AG04450 (cell line): ENCODE measurements at regions of chr16 and their contacts with region 1.

Region 1: DNA sequence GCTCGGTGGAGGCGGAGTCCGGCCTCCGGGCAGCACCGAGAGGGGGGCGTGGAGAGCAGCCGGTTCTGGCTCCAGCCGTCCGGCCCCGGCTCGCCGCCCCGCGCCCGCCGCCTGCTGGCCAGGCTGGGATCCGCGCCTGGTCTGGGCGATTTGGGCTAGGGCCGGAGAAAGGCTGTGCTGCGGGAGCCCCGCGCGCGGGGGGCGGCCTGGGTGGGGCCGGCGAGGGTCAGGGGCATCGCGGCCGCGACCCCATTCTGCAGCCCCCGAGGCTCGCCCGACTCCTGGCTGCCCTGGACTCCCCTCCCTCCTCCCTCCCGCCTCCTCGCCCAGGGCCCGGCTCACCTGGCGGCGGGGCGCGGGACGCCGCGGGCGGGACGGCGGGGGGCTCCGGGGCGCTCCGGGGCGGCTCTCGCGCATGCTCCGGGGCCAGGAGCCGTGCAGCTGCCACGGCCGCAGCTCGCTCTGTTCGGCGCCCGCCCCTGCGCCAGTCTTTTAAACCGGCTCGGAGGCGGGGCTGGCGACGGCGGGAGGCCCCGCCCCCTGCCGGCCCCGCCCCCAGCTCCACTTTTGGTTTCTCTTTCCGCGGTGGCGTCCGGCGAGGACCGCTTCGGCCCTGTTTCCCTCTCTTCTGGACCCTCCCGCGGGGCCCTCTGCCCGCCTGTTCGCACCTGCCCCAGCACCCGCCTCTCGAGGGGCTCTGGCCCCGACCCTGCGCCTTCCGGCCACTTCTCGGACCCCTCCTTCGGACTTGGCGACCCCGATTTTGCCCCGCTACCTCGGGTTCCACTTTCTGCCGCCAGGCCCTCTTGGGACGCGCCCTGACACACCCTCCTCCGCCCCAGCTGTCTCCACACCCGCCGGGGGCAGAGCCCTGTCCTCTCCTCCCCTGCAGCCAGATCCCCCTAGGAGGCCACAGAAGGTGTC is at the start of gene SOCS1:
- DNase-seq: peak; percentile 66
- H3K4me3 ChIP-seq: peak within 1 kb of the TSS; percentile 97
- H3K27ac ChIP-seq: peak within 1 kb of the TSS; percentile 97
- H3K27me3 ChIP-seq: peaks cover 2% of the 10 kb centered on the region
- CTCF ChIP-seq: peak; percentile 64
- polyA plus RNA-seq, gene SOCS1: 11.6 and 21.9 TPM in 2 replicates

Region 2: GRCh38 chr16:10949370-10949970 is 306.5 kb before region 1 on chr16:
- CTCF ChIA-PET with region 1: interaction called, 19 read pairs
- POLR2A ChIA-PET with region 1: interaction called, 6 read pairs
- DNase-seq: no peak
- H3K4me3 ChIP-seq: no peak overlapping the region
- H3K27ac ChIP-seq: no peak overlapping the region
- H3K27me3 ChIP-seq: no peaks in the 10 kb centered on the region
- CTCF ChIP-seq: no peak

Region 3: DNA sequence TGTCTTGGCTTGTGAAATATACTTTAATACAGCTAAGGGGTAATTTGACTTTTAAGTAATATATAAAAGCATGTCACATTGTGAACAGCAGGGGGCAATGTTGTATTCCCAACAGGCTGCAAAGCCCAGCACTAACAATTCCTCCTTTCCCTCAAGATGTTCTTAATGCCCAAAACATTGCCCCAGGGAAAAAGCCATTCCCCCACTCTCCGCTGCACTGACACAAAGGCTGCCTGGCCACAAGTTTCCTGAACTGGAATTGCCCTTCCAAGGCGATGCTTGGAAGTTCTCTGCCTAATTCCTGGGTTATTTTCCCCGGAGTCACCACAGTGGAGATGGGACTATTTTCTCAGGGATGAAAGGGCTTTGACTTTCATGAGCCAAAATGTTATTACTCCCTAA is 284.4 kb before region 1 on chr16:
- CTCF ChIA-PET with region 1: interaction called, 45 read pairs
- POLR2A ChIA-PET with region 1: interaction called, 26 read pairs
- DNase-seq: peak; percentile 88
- H3K4me3 ChIP-seq: no peak overlapping the region
- H3K27ac ChIP-seq: peak overlapping the region; percentile 4
- H3K27me3 ChIP-seq: no peaks in the 10 kb centered on the region
- CTCF ChIP-seq: peak; percentile 75

Region 4: DNA sequence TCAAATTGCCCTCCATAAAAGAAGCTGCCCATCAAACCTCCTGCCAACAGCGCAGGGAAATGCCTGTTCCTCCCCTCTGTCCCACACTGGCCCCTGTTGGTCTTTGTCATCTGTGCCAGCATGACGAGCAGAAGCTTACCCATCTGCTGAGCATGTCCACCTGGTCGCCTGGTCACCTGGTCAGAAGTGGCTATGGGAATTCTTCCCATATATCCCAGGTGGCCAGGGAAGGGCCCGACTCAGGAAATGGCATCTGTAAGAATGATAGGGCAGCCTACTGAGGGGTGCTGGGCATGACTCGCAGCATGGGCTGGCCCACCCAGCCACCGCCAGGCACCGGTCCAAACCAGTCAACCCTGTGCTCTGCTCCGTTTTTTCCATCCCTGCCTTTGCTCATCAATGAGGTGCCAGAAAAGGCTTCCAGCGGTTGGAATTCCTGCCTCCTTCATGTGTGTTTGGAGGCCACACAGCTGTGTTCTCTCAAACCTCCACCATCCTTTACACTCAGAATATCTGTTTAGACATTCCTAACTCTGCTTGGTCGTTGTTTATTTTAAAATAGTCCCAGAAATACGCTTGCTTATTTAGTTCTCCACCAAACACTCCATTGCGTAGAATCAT is 166.4 kb before region 1 on chr16:
- CTCF ChIA-PET with region 1: interaction called, 4 read pairs
- POLR2A ChIA-PET with region 1: interaction called, 14 read pairs
- DNase-seq: peak; percentile 98
- H3K4me3 ChIP-seq: no peak overlapping the region
- H3K27ac ChIP-seq: peak overlapping the region; percentile 97
- H3K27me3 ChIP-seq: no peaks in the 10 kb centered on the region
- CTCF ChIP-seq: no peak

Region 5: DNA sequence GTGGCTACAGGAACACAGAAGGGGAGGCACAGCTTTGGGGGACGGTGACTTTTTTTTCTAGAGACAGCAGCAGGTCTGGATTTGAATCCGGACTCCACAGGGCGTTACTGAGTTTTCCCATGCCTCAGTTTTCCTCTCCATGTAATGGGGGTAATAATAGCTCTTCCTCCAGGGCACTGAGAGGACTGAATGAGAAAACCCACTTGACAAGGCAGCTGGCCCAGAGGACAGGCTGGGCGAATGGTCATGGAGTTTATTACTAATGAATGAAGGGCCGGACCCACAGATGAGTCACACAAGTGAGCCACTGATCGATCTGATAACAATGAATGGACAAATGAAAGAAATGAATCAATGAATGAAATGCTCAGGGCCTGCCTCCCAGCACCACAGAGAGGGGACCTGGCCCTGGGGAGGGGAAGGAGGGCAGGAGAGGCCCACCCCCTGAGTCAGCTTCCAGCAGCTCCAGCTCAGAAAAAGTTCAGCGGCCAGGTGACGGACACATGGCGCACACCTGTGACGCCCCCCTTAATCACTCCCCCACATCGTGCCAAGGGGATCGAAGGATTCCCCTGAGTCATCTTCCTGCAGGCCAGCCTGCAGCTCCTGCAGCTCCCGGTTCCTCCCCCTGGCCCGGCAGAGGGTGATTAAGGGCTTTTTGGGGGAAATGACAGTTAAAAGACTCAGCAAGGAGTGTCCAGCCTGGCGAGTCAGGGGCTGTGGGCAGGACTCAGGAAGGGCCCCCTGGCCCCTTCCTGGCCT is 54.3 kb before region 1 on chr16:
- CTCF ChIA-PET with region 1: interaction called, 4 read pairs
- POLR2A ChIA-PET with region 1: interaction called, 11 read pairs
- DNase-seq: peak; percentile 59
- H3K4me3 ChIP-seq: no peak overlapping the region
- H3K27ac ChIP-seq: peak overlapping the region; percentile 69
- H3K27me3 ChIP-seq: no peaks in the 10 kb centered on the region
- CTCF ChIP-seq: no peak

Region 6: DNA sequence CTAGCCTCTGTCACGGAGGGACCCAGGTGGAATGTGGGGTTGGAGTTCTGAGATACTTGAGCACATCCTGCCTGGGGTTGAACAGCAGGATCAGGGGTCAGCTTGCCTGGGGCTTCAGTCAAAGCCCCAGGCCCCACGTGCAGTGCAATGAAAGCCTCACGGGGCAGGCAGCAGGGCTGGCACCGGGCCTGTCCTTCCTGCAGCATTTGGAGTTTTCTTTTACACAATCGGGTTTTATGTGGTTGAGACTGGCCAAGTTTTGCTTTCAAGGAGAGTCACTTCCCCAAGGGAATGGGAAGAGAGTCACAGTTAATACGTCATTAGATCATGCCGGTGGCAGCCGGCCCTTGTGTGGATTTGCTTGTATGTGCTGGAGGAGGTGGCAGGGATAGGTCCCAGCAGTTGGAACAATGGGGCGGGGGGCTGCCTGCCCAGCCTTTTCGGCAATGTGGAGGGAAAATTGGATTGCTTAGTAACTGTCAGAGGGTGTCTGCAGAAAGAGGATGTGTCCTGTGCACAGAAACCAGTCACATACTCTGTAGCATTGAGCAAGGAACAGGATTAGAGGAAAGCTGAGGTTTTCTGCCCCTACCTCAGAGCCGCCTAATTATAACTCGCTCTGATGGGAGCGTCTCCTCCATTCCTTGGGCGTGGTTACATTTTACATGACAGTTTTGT is 93.7 kb after region 1 on chr16:
- CTCF ChIA-PET with region 1: interaction called, 11 read pairs
- POLR2A ChIA-PET with region 1: interaction called, 15 read pairs
- DNase-seq: no peak
- H3K4me3 ChIP-seq: no peak overlapping the region
- H3K27ac ChIP-seq: peak overlapping the region; percentile 85
- H3K27me3 ChIP-seq: no peaks in the 10 kb centered on the region
- CTCF ChIP-seq: no peak